AG04449 (cell line): ENCODE measurements at regions of chr5 and their contacts with region 1.

Region 1: DNA sequence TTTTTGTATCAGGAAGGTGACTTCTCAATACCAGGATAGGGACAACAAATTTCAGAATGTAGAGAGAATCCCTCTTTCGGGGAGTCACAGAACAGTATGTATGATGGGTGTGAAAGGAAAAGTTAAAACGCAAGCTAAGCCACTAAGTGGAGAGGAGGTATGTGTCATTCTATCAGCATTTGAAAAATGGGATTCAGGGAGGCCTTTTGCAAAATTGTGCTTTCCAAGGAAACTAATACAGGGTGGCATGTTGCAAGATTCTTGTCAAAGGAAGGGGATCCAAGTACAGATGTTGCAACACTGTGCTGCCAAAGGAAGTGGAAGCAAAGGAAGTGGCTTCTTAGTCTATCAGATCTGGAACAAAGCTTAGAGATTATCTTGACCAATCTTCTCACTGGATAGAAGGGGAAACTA is 12.6 kb upstream of the TNIP1 start:
- DNase-seq: peak; percentile 91
- H3K4me3 ChIP-seq: no peak overlapping the region
- CTCF ChIP-seq: no peak

Region 2: GRCh38 chr5:150377964-150378694 is 715.4 kb before region 1 on chr5:
- CTCF ChIA-PET with region 1: no interaction called
- POLR2A ChIA-PET with region 1: no interaction called
- DNase-seq: peak; percentile 97
- H3K4me3 ChIP-seq: no peak overlapping the region
- CTCF ChIP-seq: no peak

Region 3: GRCh38 chr5:151080623-151081430 is 12.7 kb before region 1 on chr5 and contains the start of gene TNIP1:
- CTCF ChIA-PET with region 1: interaction called, 10 read pairs
- POLR2A ChIA-PET with region 1: interaction called, 11 read pairs
- DNase-seq: no peak
- H3K4me3 ChIP-seq: peak within 1 kb of the TSS; percentile 80
- CTCF ChIP-seq: no peak

Region 4: GRCh38 chr5:151338734-151339133 is 245.3 kb after region 1 on chr5:
- CTCF ChIA-PET with region 1: no interaction called
- POLR2A ChIA-PET with region 1: no interaction called
- DNase-seq: no peak
- H3K4me3 ChIP-seq: no peak overlapping the region
- CTCF ChIP-seq: no peak